ENCODE measurements at regions of chr5 and their contacts with region 1.

Region 1: DNA sequence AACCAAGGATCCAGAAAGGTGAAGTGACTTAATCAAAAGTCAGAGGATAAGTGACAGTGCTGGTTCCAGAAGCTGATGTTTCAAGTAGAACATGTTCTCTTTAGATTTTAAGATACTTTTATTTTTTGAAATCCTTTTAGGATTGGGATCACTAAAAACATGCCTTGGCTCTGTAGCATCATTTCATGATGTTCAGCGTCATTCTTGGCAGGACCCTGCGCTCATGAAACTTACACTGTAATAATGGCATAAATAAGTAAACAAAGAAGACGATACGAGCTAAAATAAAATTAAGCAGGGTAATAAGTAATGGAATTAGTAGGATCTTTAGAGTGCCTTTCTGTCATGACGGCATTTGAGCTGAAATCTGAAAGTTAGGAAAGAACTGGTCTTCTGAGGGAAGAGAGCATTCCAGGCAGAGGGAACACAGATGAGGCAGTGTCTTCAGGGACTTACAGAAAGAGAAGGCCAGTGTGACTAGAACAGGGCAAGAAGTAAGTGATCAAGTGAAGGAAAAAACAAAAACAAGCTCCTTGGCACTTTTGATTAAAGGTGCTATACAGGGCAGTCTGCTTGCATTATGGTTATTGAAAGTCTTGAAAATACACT is 19.9 kb downstream of the CTNNA1 start:
- DNase-seq: no peak
- H3K4me3 Mint-ChIP-seq: no peak overlapping the region
- H3K27ac Mint-ChIP-seq: no peak overlapping the region
- H3K4me1 Mint-ChIP-seq: no peaks in the 10 kb centered on the region
- H3K27me3 Mint-ChIP-seq: peaks cover 2% of the 10 kb centered on the region

Region 2: GRCh38 chr5:138641547-138642298 is 131.4 kb before region 1 on chr5:
- intact Hi-C with region 1: loop called (anchors 5 kb)
- DNase-seq: peak; percentile 52
- H3K4me3 Mint-ChIP-seq: no peak overlapping the region
- H3K27ac Mint-ChIP-seq: no peak overlapping the region
- H3K4me1 Mint-ChIP-seq: no peaks in the 10 kb centered on the region
- H3K27me3 Mint-ChIP-seq: peaks cover 59% of the 10 kb centered on the region

Measured in activated T-helper 1 cell treated with anti-CD3 and anti-CD28 coated beads, Interleukin-12 subunit alpha, Interleukin-12 subunit beta, Interleukin-2, Interleukin-4 antibody, amounts not matched to agents 30 ng/mL and 10 ng/mL and 1 ng/mL, durations not matched to agents 14 hours and 24 hours and 36 hours (primary cell).